Naive thymus-derived CD4-positive, alpha-beta T cell (primary cell): ENCODE measurements at regions of chr5 and their contacts with region 1.

Region 1: GRCh38 chr5:103258368-103258956 is at the start of gene MACIR:
- DNase-seq: peak; percentile 82 to 91 (median 87)
- ATAC-seq: peak; percentile 96
- H3K4me3 ChIP-seq: peak within 1 kb of the TSS; percentile 79
- H3K4me3 Mint-ChIP-seq: peak within 1 kb of the TSS; percentile 79 to 94 (median 88)
- H3K27ac ChIP-seq: peak within 1 kb of the TSS; percentile 63
- H3K27ac Mint-ChIP-seq: peak within 1 kb of the TSS; percentile 54 to 91 (median 82)
- H3K4me1 ChIP-seq: no peaks in the 10 kb centered on the region
- H3K4me1 Mint-ChIP-seq: peaks cover 10 to 25% (median 15%) of the 10 kb centered on the region in 7 donors
- H3K27me3 ChIP-seq: no peaks in the 10 kb centered on the region
- H3K27me3 Mint-ChIP-seq: peaks cover 0 to 32% (median 12%) of the 10 kb centered on the region in 5 donors
- total RNA-seq, gene MACIR: 2.0 to 6.1 (median 2.7) TPM

Region 2: DNA sequence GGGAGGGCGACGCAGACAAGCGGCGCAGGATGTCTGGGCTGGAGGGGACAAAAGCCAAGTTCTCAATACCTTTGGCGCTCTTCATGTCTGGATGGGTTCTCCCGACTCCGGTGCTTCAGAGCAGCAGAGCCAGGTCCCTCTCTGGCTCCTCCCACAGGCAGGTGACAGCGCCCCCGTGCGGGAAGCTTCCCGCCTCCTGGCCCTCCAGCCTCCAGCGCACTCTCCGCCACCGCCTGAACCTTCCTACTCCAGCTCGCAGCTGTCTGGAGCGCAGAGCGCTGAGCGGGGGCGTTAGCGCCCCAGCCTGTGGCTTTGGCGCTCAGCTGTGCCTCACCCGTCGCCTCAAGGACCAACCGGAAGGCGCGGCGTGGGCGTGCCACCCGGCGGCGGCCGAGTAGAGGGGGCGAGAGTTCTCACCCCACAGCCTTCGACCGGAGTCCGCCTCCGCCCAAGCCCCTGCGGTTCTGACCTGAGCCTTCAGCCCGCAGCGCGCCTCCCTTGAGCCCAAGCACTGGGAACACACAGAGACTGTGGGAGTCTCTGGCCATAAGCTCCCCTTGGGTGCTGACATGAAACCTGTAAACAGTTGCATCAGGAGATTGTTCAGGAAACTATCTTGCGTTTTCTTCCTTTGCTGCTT is 962.2 kb before region 1 on chr5 and contains the start of gene SLCO4C1:
- CTCF ChIA-PET with region 1: no interaction called
- POLR2A ChIA-PET with region 1: no interaction called
- intact Hi-C with region 1: loop called in 1 of 2 experiments (anchors 10 kb)
- DNase-seq: peak; percentile 28 to 81 (median 53)
- ATAC-seq: peak; percentile 92
- H3K4me3 ChIP-seq: peak within 1 kb of the TSS; percentile 76
- H3K4me3 Mint-ChIP-seq: peak within 1 kb of the TSS; percentile 83 to 90 (median 88)
- H3K27ac ChIP-seq: peak within 1 kb of the TSS; percentile 20
- H3K27ac Mint-ChIP-seq: peak within 1 kb of the TSS; percentile 25 to 78 (median 62)
- H3K4me1 ChIP-seq: peaks cover 0 to 5% of the 10 kb centered on the region in 2 donors
- H3K4me1 Mint-ChIP-seq: peaks cover 12 to 28% (median 23%) of the 10 kb centered on the region in 7 donors
- H3K27me3 ChIP-seq: no peaks in the 10 kb centered on the region
- H3K27me3 Mint-ChIP-seq: peaks cover 0 to 13% (median 4%) of the 10 kb centered on the region in 5 donors
- total RNA-seq, gene SLCO4C1: 0.05 to 3.7 (median 0.56) TPM

Region 3: GRCh38 chr5:103119765-103120606 is 138.5 kb before region 1 on chr5 and contains the starts of genes GIN1 and PPIP5K2:
- CTCF ChIA-PET with region 1: interaction called, 4 read pairs
- POLR2A ChIA-PET with region 1: interaction called, 18 read pairs
- intact Hi-C with region 1: loop called (anchors 1 kb)
- DNase-seq: peak; percentile 91 to 98 (median 97)
- ATAC-seq: peak; percentile 96
- H3K4me3 ChIP-seq: peak within 1 kb of the TSS; percentile 92
- H3K4me3 Mint-ChIP-seq: peak within 1 kb of the TSS; percentile 89 to 100 (median 96)
- H3K27ac ChIP-seq: peak within 1 kb of the TSS; percentile 90
- H3K27ac Mint-ChIP-seq: peak within 1 kb of the TSS; percentile 92 to 100 (median 96)
- H3K4me1 ChIP-seq: peaks cover 9 to 29% of the 10 kb centered on the region in 2 donors
- H3K4me1 Mint-ChIP-seq: peaks cover 24 to 74% (median 65%) of the 10 kb centered on the region in 7 donors
- H3K27me3 ChIP-seq: no peaks in the 10 kb centered on the region
- H3K27me3 Mint-ChIP-seq: no peaks in the 10 kb centered on the region
- total RNA-seq, gene GIN1: 4.0 to 20.9 (median 9.6) TPM
- total RNA-seq, gene PPIP5K2: 59.4 to 77.4 (median 69.3) TPM

Region 4: GRCh38 chr5:103132684-103133083 is 125.8 kb before region 1 on chr5:
- CTCF ChIA-PET with region 1: no interaction called
- POLR2A ChIA-PET with region 1: no interaction called
- intact Hi-C with region 1: no loop called
- DNase-seq: no peak
- ATAC-seq: no peak
- H3K4me3 ChIP-seq: no peak overlapping the region
- H3K4me3 Mint-ChIP-seq: peak overlapping the region in 1 of 10 donors; percentile 11
- H3K27ac ChIP-seq: no peak overlapping the region
- H3K27ac Mint-ChIP-seq: peak overlapping the region in 7 of 9 donors; percentile 2 to 81 (median 32)
- H3K4me1 ChIP-seq: no peaks in the 10 kb centered on the region
- H3K4me1 Mint-ChIP-seq: peaks cover 14 to 61% (median 44%) of the 10 kb centered on the region in 7 donors
- H3K27me3 ChIP-seq: no peaks in the 10 kb centered on the region
- H3K27me3 Mint-ChIP-seq: no peaks in the 10 kb centered on the region

Region 5: GRCh38 chr5:103224118-103224893 is 34.2 kb before region 1 on chr5:
- CTCF ChIA-PET with region 1: interaction called, 3 read pairs
- POLR2A ChIA-PET with region 1: no interaction called
- intact Hi-C with region 1: loop called in 1 of 2 experiments (anchors 2 kb)
- DNase-seq: peak in 8 of 9 donors; percentile 10 to 60 (median 38)
- ATAC-seq: peak; percentile 97
- H3K4me3 ChIP-seq: no peak overlapping the region
- H3K4me3 Mint-ChIP-seq: peak overlapping the region in 1 of 10 donors; percentile 21
- H3K27ac ChIP-seq: no peak overlapping the region
- H3K27ac Mint-ChIP-seq: no peak overlapping the region
- H3K4me1 ChIP-seq: no peaks in the 10 kb centered on the region
- H3K4me1 Mint-ChIP-seq: peaks cover 0 to 5% (median 0%) of the 10 kb centered on the region in 7 donors
- H3K27me3 ChIP-seq: peaks cover 0 to 4% of the 10 kb centered on the region in 2 donors
- H3K27me3 Mint-ChIP-seq: peaks cover 11 to 46% (median 27%) of the 10 kb centered on the region in 5 donors

Region 6: GRCh38 chr5:103562453-103563157 is 304.1 kb after region 1 on chr5 and contains the start of gene NUDT12:
- CTCF ChIA-PET with region 1: no interaction called
- POLR2A ChIA-PET with region 1: interaction called, 5 read pairs
- intact Hi-C with region 1: loop called in 1 of 2 experiments (anchors 1 kb)
- DNase-seq: peak; percentile 8 to 57 (median 34)
- ATAC-seq: peak; percentile 78
- H3K4me3 ChIP-seq: peak within 1 kb of the TSS; percentile 66
- H3K4me3 Mint-ChIP-seq: peak within 1 kb of the TSS; percentile 88 to 98 (median 92)
- H3K27ac ChIP-seq: peak within 1 kb of the TSS; percentile 65
- H3K27ac Mint-ChIP-seq: peak within 1 kb of the TSS in 8 of 9 donors; percentile 72 to 93 (median 86)
- H3K4me1 ChIP-seq: no peaks in the 10 kb centered on the region
- H3K4me1 Mint-ChIP-seq: peaks cover 9 to 40% (median 20%) of the 10 kb centered on the region in 7 donors
- H3K27me3 ChIP-seq: no peaks in the 10 kb centered on the region
- H3K27me3 Mint-ChIP-seq: peaks cover 0 to 5% (median 4%) of the 10 kb centered on the region in 5 donors
- total RNA-seq, gene NUDT12: 0.75 to 4.7 (median 1.7) TPM